ENCODE measurements at regions of chr21 and their contacts with region 1.

Region 1: DNA sequence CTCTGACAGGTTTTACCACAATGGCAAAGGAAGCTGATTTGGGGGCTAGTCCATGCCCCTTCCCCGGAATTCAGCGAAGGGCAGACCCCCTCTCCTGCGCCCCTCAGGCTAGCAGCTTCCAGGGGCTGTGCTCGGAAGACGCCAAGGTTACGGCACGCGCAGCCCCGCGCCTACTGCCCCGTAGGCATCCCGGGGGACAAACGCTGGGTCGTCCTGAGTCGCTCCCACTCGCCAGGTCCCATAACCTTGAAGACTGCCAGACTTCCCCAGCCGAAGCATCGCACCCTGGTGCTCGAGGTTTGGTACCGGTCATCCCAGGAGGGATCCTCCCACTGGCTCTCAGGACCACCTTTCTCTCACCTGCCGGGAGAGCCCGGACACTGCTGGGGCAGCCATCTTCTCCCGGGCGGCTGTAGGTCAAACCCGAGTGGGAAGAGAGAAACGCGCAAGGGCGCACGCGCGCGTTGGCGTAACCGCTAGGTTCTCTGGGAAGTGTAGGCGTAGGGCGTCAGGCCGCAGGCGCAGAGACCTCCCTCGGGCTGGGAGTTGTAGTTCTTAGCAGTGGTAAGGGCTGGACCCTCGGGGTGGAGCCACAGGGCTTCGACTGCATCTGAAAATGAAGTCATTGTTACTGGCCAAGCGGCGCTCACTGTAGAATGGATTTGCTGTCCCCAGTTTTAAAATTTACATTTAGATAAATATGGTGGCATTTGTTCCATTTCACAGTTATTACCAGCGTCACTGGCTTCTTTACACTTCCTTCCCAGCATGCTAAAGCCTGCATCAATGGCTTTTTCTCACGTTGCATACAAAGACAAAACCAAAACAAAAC is at the start of gene ATP5PO:
- DNase-seq: peak; percentile 98
- H3K4me3 Mint-ChIP-seq: peak within 1 kb of the TSS; percentile 98
- H3K27ac Mint-ChIP-seq: peak within 1 kb of the TSS; percentile 95
- H3K4me1 Mint-ChIP-seq: peaks cover 27% of the 10 kb centered on the region
- H3K27me3 Mint-ChIP-seq: no peaks in the 10 kb centered on the region
- total RNA-seq, gene ATP5PO: 230 TPM

Region 2: DNA sequence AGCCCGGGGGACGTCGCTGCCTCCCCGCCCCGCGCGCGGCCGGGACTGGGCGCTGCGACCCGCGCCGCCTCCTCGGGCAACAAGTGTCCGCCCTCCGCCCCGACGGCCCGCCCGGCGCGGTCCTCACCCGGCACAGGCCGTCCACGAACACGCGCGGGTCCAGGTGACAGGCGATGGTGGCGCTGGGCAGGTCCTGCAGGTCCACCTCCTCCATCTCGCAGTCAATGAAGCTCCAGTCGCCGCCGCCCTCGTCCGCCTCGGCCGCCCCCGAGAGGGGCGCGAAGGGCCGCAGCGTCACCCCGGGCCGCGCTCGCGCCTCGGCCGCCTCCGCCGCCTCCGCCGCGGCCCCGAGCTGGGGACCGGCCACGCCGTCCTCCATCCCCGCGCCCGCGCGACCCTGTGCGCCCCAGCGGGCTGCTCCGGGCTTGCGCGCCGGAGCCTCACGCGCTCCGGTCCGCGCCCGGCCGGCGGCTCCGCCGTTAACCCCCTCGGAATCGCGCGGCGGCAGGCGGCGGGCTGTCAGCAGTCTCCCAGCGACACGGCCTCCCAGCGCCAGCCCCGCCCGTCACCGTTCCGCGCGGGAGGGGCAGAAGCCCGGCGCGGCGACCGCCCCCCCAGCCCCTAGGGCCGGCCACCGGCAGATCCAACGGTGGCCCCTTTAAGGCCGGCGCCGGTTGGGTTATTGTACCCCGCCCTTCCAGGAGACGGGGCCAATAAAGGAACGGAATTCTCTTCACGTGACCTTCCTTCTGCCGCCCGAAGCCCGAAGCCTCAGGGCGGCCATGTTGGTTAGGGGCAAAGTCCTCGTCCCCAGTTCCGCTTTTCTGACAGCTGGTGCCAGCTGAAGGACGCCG is 699.3 kb after region 1 on chr21 and contains the start of gene RCAN1:
- CTCF ChIA-PET with region 1: no interaction called
- intact Hi-C with region 1: loop called (anchors 5 kb)
- DNase-seq: peak; percentile 90
- H3K4me3 Mint-ChIP-seq: peak within 1 kb of the TSS; percentile 84
- H3K27ac Mint-ChIP-seq: peak within 1 kb of the TSS; percentile 48
- H3K4me1 Mint-ChIP-seq: peaks cover 17% of the 10 kb centered on the region
- H3K27me3 Mint-ChIP-seq: no peaks in the 10 kb centered on the region
- total RNA-seq, gene RCAN1: 2.3 to 2.9 TPM

Measured in activated naive CD4-positive, alpha-beta T cell treated with anti-CD3 and anti-CD28 coated beads for 36 hours (primary cell).